HEK293 (cell line): ENCODE measurements at regions of chrX and their contacts with region 1.

Region 1: GRCh38 chrX:140507991-140508323 is 3.1 kb upstream of the SOX3 start:
- H3K4me3 ChIP-seq: peak overlapping the region; percentile 33
- H3K27ac ChIP-seq: peak overlapping the region; percentile 91
- H3K4me1 ChIP-seq: peaks cover 6% of the 10 kb centered on the region; the same call in 1 of the 2 replicates
- CTCF ChIP-seq: peak; percentile 64

Region 2: DNA sequence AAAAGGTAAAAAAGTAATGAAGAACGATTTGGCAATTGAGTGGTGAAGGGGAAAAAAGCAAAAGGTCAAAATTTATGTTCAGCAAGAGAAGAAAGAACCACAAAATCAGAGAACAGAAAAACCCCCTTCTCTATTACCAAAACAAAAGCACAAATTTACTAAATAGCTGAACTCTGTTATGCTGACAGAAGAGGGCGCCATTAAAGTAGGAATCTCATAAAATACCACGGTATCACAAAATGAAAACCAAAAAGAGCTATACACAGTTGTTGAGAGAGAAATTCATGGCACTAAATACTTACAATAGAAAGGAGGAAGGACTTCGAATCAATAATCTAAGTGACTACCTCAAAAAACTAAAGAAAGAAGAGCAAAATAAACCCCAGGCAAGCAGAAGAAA is 473.0 kb before region 1 on chrX:
- CTCF ChIA-PET with region 1: interaction called, 17 read pairs
- POLR2A ChIA-PET with region 1: no interaction called
- H3K4me3 ChIP-seq: no peak overlapping the region
- H3K27ac ChIP-seq: no peak overlapping the region
- H3K4me1 ChIP-seq: no peaks in the 10 kb centered on the region
- CTCF ChIP-seq: no peak

Region 3: GRCh38 chrX:140050906-140051305 is 457.1 kb before region 1 on chrX:
- CTCF ChIA-PET with region 1: interaction called, 26 read pairs
- POLR2A ChIA-PET with region 1: no interaction called
- H3K4me3 ChIP-seq: no peak overlapping the region
- H3K27ac ChIP-seq: no peak overlapping the region
- H3K4me1 ChIP-seq: no peaks in the 10 kb centered on the region
- CTCF ChIP-seq: no peak

Region 4: GRCh38 chrX:140057001-140057411 is 451.0 kb before region 1 on chrX:
- CTCF ChIA-PET with region 1: interaction called, 26 read pairs
- POLR2A ChIA-PET with region 1: interaction called, 5 read pairs
- H3K4me3 ChIP-seq: no peak overlapping the region
- H3K27ac ChIP-seq: no peak overlapping the region
- H3K4me1 ChIP-seq: no peaks in the 10 kb centered on the region
- CTCF ChIP-seq: peak; percentile 86

Region 5: GRCh38 chrX:140141444-140142029 is 366.4 kb before region 1 on chrX:
- CTCF ChIA-PET with region 1: interaction called, 10 read pairs
- POLR2A ChIA-PET with region 1: interaction called, 3 read pairs
- H3K4me3 ChIP-seq: no peak overlapping the region
- H3K27ac ChIP-seq: no peak overlapping the region
- H3K4me1 ChIP-seq: no peaks in the 10 kb centered on the region
- CTCF ChIP-seq: no peak

Region 6: GRCh38 chrX:140149761-140150160 is 358.2 kb before region 1 on chrX:
- CTCF ChIA-PET with region 1: interaction called, 29 read pairs
- POLR2A ChIA-PET with region 1: no interaction called
- H3K4me3 ChIP-seq: no peak overlapping the region
- H3K27ac ChIP-seq: no peak overlapping the region
- H3K4me1 ChIP-seq: no peaks in the 10 kb centered on the region
- CTCF ChIP-seq: no peak

Region 7: DNA sequence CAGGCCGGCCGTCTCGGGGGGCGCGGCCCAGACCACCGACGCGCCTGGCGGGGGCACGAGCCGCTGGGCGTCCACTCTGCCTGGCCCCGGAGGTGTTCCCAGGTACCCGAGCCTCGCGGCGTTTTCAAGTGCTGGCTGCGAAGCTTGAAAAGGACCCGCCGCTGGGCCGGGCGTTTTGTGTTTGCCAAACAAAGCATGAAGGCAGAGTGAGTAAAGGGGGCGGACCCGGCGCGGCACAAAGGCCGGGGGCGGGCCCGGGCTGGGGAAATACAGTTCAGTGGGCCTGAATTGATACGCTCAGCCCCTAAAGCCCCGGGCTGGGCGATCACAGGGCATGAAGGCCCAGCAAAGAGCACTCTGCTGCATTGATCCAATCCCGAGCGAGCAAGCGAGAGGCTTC is 68.5 kb before region 1 on chrX:
- CTCF ChIA-PET with region 1: no interaction called
- POLR2A ChIA-PET with region 1: no interaction called
- H3K4me3 ChIP-seq: no peak overlapping the region
- H3K27ac ChIP-seq: no peak overlapping the region
- H3K4me1 ChIP-seq: peaks cover 2% of the 10 kb centered on the region
- CTCF ChIP-seq: no peak

Region 8: GRCh38 chrX:140480765-140481164 is 27.2 kb before region 1 on chrX:
- CTCF ChIA-PET with region 1: interaction called, 4 read pairs
- POLR2A ChIA-PET with region 1: interaction called, 10 read pairs
- H3K4me3 ChIP-seq: no peak overlapping the region
- H3K27ac ChIP-seq: peak overlapping the region; percentile 86
- H3K4me1 ChIP-seq: peaks cover 20% of the 10 kb centered on the region
- CTCF ChIP-seq: no peak